ENCODE measurements at regions of chr3 and their contacts with region 1.

Region 1: GRCh38 chr3:159964166-159964973 is 24.3 kb upstream of the IL12A start:
- DNase-seq: no peak
- H3K4me3 ChIP-seq: no peak overlapping the region
- H3K27ac ChIP-seq: peak overlapping the region; percentile 5
- H3K4me1 ChIP-seq: peaks cover 5% of the 10 kb centered on the region
- H3K27me3 ChIP-seq: no peaks in the 10 kb centered on the region
- CTCF ChIP-seq: no peak

Region 2: DNA sequence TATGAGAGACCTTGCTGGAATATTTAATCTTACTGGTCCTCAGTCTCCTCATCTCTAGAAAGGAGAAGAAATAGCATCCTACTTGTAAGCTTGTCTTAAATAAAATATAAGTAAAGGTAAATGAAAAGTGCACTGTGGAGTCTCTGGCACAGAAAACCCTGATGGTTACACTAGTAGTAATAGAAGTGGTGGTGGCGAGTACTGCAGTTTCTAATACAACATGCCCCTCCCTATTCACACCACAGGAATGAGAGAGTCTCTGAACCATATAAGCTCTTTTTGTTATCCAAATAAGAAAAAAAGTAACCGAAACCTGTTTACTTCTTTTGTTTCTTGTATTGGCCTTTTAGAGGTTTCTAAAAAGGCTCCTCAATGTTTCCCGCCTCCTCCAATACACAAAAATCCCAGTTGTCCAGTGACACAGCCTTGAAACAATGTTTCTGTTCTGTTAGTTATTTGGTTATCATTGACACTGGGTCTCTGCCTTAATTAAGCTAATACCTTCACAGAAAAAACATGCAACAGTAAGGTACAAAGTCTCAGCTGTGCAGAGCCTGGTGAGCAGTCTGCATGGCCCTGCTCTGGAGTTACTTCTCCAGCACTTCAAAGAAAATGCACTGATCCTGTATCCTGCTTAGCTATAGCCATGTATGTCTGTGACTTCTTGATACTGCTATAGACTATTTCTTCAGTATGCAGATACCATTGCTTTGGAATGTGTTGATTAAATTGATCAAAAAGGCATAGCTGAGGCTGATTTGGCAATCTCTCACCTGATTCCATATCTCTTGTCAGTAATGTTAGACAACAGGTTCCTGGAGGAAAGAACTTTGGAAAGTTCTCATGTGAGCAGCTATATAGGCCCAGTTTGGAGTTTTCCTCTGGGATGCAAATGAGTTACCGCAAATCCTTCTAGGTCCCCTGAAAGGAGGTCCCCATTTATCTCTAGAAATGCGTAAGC is 291.4 kb before region 1 on chr3:
- dilution Hi-C with region 1: no loop called
- DNase-seq: no peak
- H3K4me3 ChIP-seq: no peak overlapping the region
- H3K27ac ChIP-seq: no peak overlapping the region
- H3K4me1 ChIP-seq: peaks cover 13% of the 10 kb centered on the region
- H3K27me3 ChIP-seq: no peaks in the 10 kb centered on the region
- CTCF ChIP-seq: peak in 1 of 3 experiments; percentile 8

Region 3: DNA sequence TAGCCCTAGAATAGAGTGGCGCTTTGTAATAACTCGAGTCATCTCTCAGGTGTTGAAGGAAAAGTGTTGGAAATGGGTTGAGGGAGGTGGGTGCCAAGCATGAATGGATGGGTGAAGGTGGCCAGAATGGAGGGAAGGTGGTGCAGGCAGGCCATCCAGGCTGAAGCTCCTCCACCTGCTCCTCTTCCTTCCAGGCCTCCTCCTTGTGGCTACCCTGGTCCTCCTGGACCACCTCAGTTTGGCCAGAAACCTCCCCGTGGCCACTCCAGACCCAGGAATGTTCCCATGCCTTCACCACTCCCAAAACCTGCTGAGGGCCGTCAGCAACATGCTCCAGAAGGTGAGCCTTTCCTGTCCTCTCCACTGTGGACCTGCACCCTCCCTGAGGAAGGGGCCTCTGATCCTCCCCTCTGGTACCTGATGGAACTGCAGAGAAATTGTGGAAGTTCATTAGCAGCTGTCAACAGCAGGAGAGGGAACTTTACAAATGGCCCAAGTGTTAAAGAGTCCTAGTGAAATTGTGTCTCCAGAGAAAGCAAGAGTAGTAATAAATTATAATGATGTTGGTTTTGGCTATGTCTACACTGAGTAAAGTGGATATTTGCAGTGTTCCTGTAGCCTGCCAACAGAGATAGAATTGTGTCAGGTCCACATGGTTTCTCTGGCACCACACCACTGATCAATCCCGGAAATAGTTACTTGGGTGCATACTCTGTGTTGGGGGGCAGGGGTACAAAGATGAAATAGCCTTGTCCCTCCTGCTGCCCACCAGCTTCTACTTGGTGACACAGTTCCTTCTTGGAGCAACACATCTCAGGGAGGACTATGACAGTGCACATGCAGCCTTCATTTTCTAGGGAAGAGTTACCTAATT is 25.8 kb after region 1 on chr3:
- dilution Hi-C with region 1: loop called (anchors 5 kb)
- DNase-seq: no peak
- H3K4me3 ChIP-seq: no peak overlapping the region
- H3K27ac ChIP-seq: no peak overlapping the region
- H3K4me1 ChIP-seq: peaks cover 3% of the 10 kb centered on the region
- H3K27me3 ChIP-seq: no peaks in the 10 kb centered on the region
- CTCF ChIP-seq: no peak

Region 4: DNA sequence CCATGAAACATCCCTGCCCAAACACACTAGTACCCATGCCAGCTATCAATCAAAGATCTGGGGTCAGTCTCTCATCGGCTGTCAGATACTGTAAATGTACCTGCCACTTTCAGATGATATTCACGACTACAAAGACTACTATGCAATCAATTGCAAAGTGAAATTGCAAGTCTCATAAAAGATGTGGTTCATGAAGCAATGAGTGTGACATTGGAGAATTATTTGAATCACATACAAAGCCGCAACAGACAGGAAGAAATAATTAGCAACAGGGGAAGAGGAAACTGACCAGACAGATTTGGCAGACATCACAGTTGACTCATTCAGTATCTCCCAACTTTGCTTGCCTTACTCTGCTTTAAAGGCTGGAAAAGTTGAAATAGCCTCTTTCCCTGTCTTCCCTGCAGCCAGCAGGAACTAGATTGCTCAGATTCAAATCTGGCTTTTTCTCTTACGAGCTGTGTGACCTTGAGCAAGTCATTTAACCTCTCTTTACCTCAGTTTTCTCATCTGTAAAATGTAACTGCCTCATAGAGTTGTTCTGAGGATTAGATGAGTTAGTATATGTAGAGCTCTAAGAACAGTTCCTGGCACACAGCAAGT is 165.2 kb after region 1 on chr3:
- dilution Hi-C with region 1: no loop called
- DNase-seq: peak; percentile 36
- H3K4me3 ChIP-seq: no peak overlapping the region
- H3K27ac ChIP-seq: peak overlapping the region; percentile 53
- H3K4me1 ChIP-seq: peaks cover 23% of the 10 kb centered on the region
- H3K27me3 ChIP-seq: no peaks in the 10 kb centered on the region
- CTCF ChIP-seq: no peak